ENCODE measurements at regions of chr2 and their contacts with region 1.

Region 1: GRCh38 chr2:190382851-190383250 is 25.3 kb upstream of the MFSD6 start:
- DNase-seq: peak; percentile 78
- H3K4me3 Mint-ChIP-seq: no peak overlapping the region
- H3K27ac Mint-ChIP-seq: no peak overlapping the region
- H3K4me1 Mint-ChIP-seq: peaks cover 6% of the 10 kb centered on the region
- H3K27me3 Mint-ChIP-seq: no peaks in the 10 kb centered on the region
- CTCF ChIP-seq: peak; percentile 50

Region 2: GRCh38 chr2:189601043-189601442 is 781.8 kb before region 1 on chr2:
- CTCF ChIA-PET with region 1: no interaction called
- POLR2A ChIA-PET with region 1: no interaction called
- intact Hi-C with region 1: no loop called
- DNase-seq: peak; percentile 11
- H3K4me3 Mint-ChIP-seq: no peak overlapping the region
- H3K27ac Mint-ChIP-seq: no peak overlapping the region
- H3K4me1 Mint-ChIP-seq: no peaks in the 10 kb centered on the region
- H3K27me3 Mint-ChIP-seq: no peaks in the 10 kb centered on the region
- CTCF ChIP-seq: no peak

Region 3: GRCh38 chr2:190396271-190396670 is 13.4 kb after region 1 on chr2:
- CTCF ChIA-PET with region 1: interaction called, 27 read pairs
- POLR2A ChIA-PET with region 1: no interaction called
- intact Hi-C with region 1: no loop called
- DNase-seq: no peak
- H3K4me3 Mint-ChIP-seq: no peak overlapping the region
- H3K27ac Mint-ChIP-seq: no peak overlapping the region
- H3K4me1 Mint-ChIP-seq: no peaks in the 10 kb centered on the region
- H3K27me3 Mint-ChIP-seq: peaks cover 54% of the 10 kb centered on the region
- CTCF ChIP-seq: no peak

Region 4: DNA sequence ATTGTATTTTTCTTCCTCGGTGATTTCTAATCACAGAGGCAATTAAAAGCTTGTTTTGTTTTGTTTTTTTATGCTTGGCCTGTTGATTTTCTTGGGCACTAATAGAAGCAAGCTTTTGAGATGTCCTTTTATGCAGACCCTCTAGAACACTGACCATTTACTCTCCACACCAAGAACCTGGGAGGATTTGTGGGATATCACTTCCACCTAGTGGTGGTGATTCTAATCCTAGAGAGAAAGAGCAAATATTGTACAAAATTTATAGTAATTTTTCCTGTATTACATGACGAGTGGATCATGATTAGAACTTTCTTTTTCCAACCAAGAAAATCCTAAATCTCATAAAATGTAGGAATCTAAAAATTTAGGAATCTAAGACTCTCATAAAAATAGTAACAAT is 128.3 kb after region 1 on chr2:
- CTCF ChIA-PET with region 1: interaction called, 91 read pairs
- POLR2A ChIA-PET with region 1: interaction called, 3 read pairs
- intact Hi-C with region 1: loop called (anchors 1 kb)
- DNase-seq: peak; percentile 39
- H3K4me3 Mint-ChIP-seq: no peak overlapping the region
- H3K27ac Mint-ChIP-seq: no peak overlapping the region
- H3K4me1 Mint-ChIP-seq: peaks cover 6% of the 10 kb centered on the region
- H3K27me3 Mint-ChIP-seq: no peaks in the 10 kb centered on the region
- CTCF ChIP-seq: peak; percentile 27

Region 5: GRCh38 chr2:190679813-190680591 is 297.2 kb after region 1 on chr2:
- CTCF ChIA-PET with region 1: interaction called, 13 read pairs
- POLR2A ChIA-PET with region 1: no interaction called
- intact Hi-C with region 1: loop called (anchors 1 kb)
- DNase-seq: peak; percentile 95
- H3K4me3 Mint-ChIP-seq: peak overlapping the region; percentile 12
- H3K27ac Mint-ChIP-seq: peak overlapping the region; percentile 50
- H3K4me1 Mint-ChIP-seq: peaks cover 18% of the 10 kb centered on the region
- H3K27me3 Mint-ChIP-seq: no peaks in the 10 kb centered on the region
- CTCF ChIP-seq: peak; percentile 86

Region 6: GRCh38 chr2:190804182-190804795 is 421.4 kb after region 1 on chr2:
- CTCF ChIA-PET with region 1: interaction called, 8 read pairs
- POLR2A ChIA-PET with region 1: interaction called, 3 read pairs
- intact Hi-C with region 1: loop called (anchors 1 kb)
- DNase-seq: peak; percentile 34
- H3K4me3 Mint-ChIP-seq: no peak overlapping the region
- H3K27ac Mint-ChIP-seq: no peak overlapping the region
- H3K4me1 Mint-ChIP-seq: no peaks in the 10 kb centered on the region
- H3K27me3 Mint-ChIP-seq: no peaks in the 10 kb centered on the region
- CTCF ChIP-seq: peak; percentile 62

Measured in MCF 10A (cell line).